ENCODE measurements at regions of chr17 and their contacts with region 1.

Region 1: DNA sequence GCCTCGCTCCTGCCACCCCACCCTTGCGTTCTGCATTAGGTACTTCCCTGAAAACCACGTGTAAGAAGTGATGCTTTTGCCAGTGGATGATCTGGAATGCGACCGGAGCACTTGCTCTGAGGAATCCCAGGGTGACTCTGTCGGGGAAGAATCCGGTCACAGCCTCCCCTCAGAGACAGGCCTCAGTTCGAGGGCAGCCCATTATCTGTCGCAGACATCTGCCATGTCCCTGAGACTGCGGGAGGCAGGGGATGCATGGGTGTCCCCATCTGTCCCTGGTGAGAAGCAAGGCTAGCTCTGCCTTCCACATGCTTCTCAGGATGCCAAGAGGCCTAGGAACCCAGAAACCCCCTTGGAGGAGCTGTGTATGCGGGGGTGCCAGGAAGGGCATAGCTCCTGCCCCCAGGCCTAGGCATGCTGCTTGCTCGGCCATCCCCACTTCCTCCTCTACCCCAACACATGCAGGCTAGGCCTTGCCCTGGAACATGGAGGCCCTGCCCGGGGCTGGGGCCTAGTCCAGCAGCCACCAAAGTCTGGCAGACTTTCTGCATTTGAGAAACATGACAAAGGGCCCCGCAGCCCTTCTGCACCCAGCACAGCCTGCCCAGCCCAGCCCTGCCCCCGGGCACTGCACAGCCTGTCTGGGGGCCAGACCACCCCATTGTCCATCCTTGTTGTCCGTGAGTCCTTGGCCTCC is 20.5 kb downstream of the MNT start:
- DNase-seq: no peak
- ATAC-seq: no peak
- H3K4me3 ChIP-seq: no peak overlapping the region
- H3K27ac ChIP-seq: no peak overlapping the region
- H3K4me1 ChIP-seq: no peaks in the 10 kb centered on the region
- H3K27me3 ChIP-seq: no peaks in the 10 kb centered on the region
- CTCF ChIP-seq: no peak

Region 2: DNA sequence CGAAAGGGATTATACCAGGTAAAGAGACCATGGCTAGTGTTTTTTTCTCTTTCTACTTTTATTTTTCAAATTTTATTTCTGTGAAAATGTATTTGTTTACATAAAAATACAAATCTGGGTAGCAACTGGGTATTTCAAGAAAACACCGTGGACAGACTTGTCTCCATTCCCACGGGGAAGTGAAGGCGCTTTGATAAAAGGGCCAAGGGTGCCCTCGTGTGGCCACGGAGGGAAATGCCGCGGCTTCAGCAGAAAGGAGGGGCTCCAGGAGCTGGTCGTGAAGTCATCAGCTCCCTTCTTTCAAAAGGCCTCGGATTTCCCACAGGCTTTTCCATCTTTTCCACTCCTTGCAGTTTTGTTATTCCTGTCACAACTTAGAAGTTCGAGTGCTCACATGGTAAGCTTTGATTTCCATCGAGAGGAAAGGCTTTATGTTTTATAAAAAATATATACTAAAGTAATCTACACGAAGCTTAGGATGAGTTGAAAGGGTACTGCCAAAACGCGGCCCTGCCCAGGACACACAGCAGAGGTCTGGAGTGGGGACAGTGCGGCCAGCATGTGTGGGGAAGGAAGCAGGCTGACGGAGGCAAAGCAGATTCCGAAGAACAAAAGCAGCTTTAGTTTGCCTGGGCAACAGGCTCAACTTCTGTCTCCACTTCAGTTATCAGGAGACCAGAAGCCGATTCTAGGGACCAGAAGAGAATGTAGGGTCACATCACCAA is 35.8 kb after region 1 on chr17:
- intact Hi-C with region 1: loop called (anchors 2 to 10 kb)
- DNase-seq: peak; percentile 71 to 97 (median 92)
- ATAC-seq: peak; percentile 65 to 80 (median 78)
- H3K4me3 ChIP-seq: no peak overlapping the region
- H3K27ac ChIP-seq: peak overlapping the region in 1 of 4 donors; percentile 30
- H3K4me1 ChIP-seq: peaks cover 5 to 25% (median 7%) of the 10 kb centered on the region in 3 donors
- H3K27me3 ChIP-seq: no peaks in the 10 kb centered on the region
- CTCF ChIP-seq: peak; percentile 94 to 98 (median 96)

Region 3: DNA sequence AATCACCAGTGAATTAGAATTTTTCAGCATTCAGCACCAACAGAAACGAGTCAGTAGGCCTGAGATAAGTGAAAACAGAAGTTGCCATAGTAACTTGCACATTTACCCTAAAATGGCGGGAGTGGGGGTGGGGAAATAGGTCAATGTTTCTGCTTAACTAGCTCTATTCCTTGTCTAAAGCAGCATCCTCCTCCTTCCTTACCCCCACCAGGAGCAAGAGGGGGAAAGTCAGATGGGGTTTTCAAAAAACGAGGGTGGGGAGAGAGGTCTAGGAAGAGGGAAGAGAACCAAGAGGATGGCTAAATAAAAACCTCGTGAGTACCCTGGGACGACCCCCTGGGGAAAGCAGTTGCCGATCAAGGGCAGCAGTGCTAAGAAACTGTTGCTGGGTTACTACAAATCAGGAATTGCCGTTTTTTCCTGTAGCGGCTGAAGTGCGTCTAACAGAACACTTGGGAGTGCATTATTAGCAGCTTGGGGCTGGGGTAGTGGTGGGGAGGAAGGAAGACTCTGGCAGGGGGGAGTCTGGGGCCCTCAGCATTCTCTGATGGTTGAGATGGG is 54.9 kb after region 1 on chr17:
- intact Hi-C with region 1: no loop called
- DNase-seq: no peak
- ATAC-seq: peak; percentile 3 to 53 (median 30)
- H3K4me3 ChIP-seq: no peak overlapping the region
- H3K27ac ChIP-seq: peak overlapping the region in 2 of 4 donors; percentile 67 to 81
- H3K4me1 ChIP-seq: peaks cover 0 to 10% (median 0%) of the 10 kb centered on the region in 3 donors
- H3K27me3 ChIP-seq: no peaks in the 10 kb centered on the region
- CTCF ChIP-seq: no peak